Activated T-helper 1 cell treated with anti-CD3 and anti-CD28 coated beads, Interleukin-12 subunit alpha, Interleukin-12 subunit beta, Interleukin-2, Interleukin-4 antibody, amounts not matched to agents 30 ng/mL and 10 ng/mL and 1 ng/mL, durations not matched to agents 14 hours and 24 hours and 36 hours (primary cell): ENCODE measurements at regions of chr3 and their contacts with region 1.

Region 1: GRCh38 chr3:156483961-156484787 is 70.7 kb downstream of the SSR3 start:
- DNase-seq: peak; percentile 56
- H3K4me3 Mint-ChIP-seq: peak overlapping the region; percentile 73
- H3K27ac Mint-ChIP-seq: peak overlapping the region; percentile 86
- H3K4me1 Mint-ChIP-seq: peaks cover 42% of the 10 kb centered on the region
- H3K27me3 Mint-ChIP-seq: peaks cover 6% of the 10 kb centered on the region

Region 2: DNA sequence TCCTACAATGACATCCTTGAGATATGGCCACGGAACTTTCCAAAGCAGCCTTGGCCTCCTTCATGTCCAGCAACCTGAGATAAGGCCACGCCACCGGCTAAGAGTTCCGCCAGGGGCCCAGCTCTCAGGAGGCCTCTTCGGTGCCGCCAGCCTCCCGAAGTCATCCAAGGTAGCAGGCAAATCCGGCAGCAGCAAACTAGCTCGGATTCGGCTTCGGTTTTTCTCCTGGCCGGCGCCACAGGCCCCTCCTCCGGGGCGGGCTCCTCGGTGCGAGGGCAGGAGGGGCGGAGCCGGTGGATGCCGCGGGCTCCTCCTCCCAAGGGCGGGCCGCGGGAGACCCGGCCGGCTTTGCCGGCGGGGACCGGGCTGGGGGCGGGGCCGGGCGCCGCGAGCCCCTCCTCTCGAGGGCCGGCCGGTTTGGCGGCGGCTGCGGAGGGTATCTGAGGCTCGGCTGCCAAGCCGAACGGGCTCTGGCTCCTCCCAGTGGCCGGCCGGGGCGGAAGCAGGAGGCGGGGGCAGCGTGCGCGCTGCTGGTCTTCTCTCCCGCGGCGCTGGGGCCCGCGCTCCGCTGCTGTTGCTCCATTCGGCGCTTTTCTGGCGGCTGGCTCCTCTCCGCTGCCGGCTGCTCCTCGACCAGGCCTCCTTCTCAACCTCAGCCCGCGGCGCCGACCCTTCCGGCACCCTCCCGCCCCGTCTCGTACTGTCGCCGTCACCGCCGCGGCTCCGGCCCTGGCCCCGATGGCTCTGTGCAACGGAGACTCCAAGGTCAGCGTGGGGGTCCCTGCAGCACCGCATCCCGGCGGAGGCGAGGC is 613.8 kb before region 1 on chr3 and contains the start of gene GMPS:
- intact Hi-C with region 1: loop called (anchors 1 kb)
- DNase-seq: peak; percentile 98
- H3K4me3 Mint-ChIP-seq: peak within 1 kb of the TSS; percentile 98
- H3K27ac Mint-ChIP-seq: peak within 1 kb of the TSS; percentile 96
- H3K4me1 Mint-ChIP-seq: peaks cover 23% of the 10 kb centered on the region
- H3K27me3 Mint-ChIP-seq: no peaks in the 10 kb centered on the region
- total RNA-seq, gene GMPS: 131 and 144 TPM in 2 replicates

Region 3: GRCh38 chr3:156519758-156520162 is 35.6 kb after region 1 on chr3:
- intact Hi-C with region 1: loop called (anchors 5 kb)
- DNase-seq: no peak
- H3K4me3 Mint-ChIP-seq: no peak overlapping the region
- H3K27ac Mint-ChIP-seq: no peak overlapping the region
- H3K4me1 Mint-ChIP-seq: peaks cover 34% of the 10 kb centered on the region
- H3K27me3 Mint-ChIP-seq: peaks cover 32% of the 10 kb centered on the region

Region 4: DNA sequence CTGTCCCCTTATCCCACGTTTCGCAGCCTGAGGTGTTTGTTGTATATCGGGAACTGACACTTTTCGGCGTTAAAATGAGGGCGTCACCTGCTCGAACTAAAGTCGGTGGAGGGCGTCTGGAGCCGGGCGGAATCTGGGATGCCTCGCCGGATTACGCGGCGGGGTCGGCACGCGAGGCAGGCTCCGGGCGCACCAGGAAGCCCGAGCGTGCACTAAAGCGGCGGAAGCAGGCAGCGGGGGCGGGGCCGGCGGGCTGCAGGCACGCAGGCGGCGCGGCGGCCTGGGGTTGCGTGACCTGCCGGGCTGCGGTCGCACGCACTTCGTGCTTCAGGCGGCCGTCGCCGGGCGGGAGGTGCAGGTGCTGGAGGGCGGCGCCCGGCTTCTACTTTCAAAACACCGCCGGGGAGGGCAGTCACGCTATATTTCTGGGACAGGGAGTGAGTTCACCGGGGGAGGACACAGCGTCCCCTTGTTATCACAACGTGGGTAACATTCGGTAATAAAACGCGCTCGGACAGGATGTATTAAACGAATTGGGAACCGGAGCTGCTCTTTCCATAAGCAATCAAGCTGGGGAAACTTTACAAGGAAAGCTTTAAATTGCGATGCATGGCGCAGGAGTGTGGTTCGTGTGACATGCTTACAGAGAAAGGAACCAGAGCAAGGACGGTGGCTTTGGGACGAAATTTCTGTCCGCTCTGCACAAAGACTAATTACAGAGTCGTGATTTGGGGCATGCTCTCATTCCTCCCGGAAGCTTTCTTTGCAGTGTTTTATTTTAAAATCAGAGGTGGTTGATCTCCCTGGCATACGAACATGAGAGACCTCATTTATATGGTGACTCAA is 332.8 kb after region 1 on chr3:
- intact Hi-C with region 1: loop called (anchors 1 kb)
- DNase-seq: peak; percentile 90
- H3K4me3 Mint-ChIP-seq: peak overlapping the region; percentile 92
- H3K27ac Mint-ChIP-seq: peak overlapping the region; percentile 98
- H3K4me1 Mint-ChIP-seq: peaks cover 75% of the 10 kb centered on the region
- H3K27me3 Mint-ChIP-seq: no peaks in the 10 kb centered on the region

Region 5: GRCh38 chr3:157130467-157131251 is 646.5 kb after region 1 on chr3:
- intact Hi-C with region 1: loop called (anchors 1 kb)
- DNase-seq: peak; percentile 72
- H3K4me3 Mint-ChIP-seq: peak overlapping the region; percentile 59
- H3K27ac Mint-ChIP-seq: peak overlapping the region; percentile 90
- H3K4me1 Mint-ChIP-seq: peaks cover 84% of the 10 kb centered on the region
- H3K27me3 Mint-ChIP-seq: no peaks in the 10 kb centered on the region

Region 6: DNA sequence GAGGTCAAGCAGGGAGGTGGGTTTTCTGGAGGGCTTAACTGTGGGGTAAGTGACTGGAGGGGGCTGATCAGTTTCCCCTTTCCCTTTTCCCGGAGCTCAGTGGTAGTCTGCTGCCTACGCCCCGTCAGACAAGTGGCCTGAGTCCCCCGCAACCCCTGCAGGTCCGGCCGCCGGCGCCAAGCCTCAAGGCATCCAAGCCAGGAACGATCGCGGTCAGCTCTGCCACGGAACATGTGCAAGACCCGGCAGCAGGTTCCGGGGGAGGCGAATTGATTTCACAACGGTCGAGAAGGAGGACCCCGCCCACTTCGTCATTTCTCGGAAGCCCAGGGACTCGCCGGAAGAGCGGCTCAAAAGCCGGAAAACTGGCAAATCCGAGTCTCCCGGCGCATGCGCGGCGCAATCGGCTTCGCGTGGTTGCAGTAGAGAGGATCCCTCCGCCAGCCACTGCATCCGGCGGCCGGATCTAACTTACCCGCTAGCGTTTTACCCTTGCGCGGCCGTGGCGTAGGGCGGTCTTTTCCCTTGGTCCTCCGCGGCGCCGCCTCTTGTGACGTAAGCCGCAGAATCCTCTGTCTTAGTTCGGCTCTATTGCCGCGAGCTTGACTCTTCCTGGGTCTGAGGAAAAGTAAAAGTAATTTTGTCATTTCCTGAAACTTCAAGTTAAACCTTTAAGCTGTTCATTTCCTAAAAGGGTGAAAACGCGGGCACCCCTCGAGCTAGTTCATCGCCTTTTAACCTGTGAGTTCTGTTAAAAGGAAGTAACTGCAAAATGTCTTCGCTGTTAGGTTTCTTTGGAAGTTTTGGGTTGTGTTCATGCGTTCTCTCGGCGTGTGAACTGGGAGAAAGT is 690.7 kb after region 1 on chr3:
- intact Hi-C with region 1: loop called (anchors 1 kb)
- DNase-seq: peak; percentile 98
- H3K4me3 Mint-ChIP-seq: peak overlapping the region; percentile 94
- H3K27ac Mint-ChIP-seq: peak overlapping the region; percentile 96
- H3K4me1 Mint-ChIP-seq: peaks cover 47% of the 10 kb centered on the region
- H3K27me3 Mint-ChIP-seq: peaks cover 2% of the 10 kb centered on the region